Heart left ventricle (tissue), 16 donors: ENCODE measurements at regions of chr12 and their contacts with region 1.

Region 1: GRCh38 chr12:80195074-80195726 is 95.9 kb downstream of the OTOGL start:
- DNase-seq: peak in 1 of 5 donors; percentile 24
- ATAC-seq: peak in 2 of 4 donors; percentile 52 to 67
- H3K4me3 ChIP-seq: no peak overlapping the region
- H3K27ac ChIP-seq: peak overlapping the region in 1 of 12 donors; percentile 5
- H3K4me1 ChIP-seq: peaks cover 0 to 5% (median 0%) of the 10 kb centered on the region in 12 donors
- H3K27me3 ChIP-seq: no peaks in the 10 kb centered on the region
- CTCF ChIP-seq: peak; percentile 31 to 71 (median 51)
- POLR2A ChIP-seq: no peak

Region 2: GRCh38 chr12:79019672-79020071 is 1175.5 kb before region 1 on chr12:
- intact Hi-C with region 1: no loop called
- DNase-seq: no peak
- ATAC-seq: no peak
- H3K4me3 ChIP-seq: no peak overlapping the region
- H3K27ac ChIP-seq: no peak overlapping the region
- H3K4me1 ChIP-seq: no peaks in the 10 kb centered on the region
- H3K27me3 ChIP-seq: no peaks in the 10 kb centered on the region
- CTCF ChIP-seq: no peak
- POLR2A ChIP-seq: no peak

Region 3: GRCh38 chr12:79747274-79747673 is 447.9 kb before region 1 on chr12:
- intact Hi-C with region 1: loop called in 1 of 10 experiments (anchors 10 kb)
- DNase-seq: no peak
- ATAC-seq: no peak
- H3K4me3 ChIP-seq: no peak overlapping the region
- H3K27ac ChIP-seq: no peak overlapping the region
- H3K4me1 ChIP-seq: no peaks in the 10 kb centered on the region
- H3K27me3 ChIP-seq: no peaks in the 10 kb centered on the region
- CTCF ChIP-seq: no peak
- POLR2A ChIP-seq: no peak

Region 4: DNA sequence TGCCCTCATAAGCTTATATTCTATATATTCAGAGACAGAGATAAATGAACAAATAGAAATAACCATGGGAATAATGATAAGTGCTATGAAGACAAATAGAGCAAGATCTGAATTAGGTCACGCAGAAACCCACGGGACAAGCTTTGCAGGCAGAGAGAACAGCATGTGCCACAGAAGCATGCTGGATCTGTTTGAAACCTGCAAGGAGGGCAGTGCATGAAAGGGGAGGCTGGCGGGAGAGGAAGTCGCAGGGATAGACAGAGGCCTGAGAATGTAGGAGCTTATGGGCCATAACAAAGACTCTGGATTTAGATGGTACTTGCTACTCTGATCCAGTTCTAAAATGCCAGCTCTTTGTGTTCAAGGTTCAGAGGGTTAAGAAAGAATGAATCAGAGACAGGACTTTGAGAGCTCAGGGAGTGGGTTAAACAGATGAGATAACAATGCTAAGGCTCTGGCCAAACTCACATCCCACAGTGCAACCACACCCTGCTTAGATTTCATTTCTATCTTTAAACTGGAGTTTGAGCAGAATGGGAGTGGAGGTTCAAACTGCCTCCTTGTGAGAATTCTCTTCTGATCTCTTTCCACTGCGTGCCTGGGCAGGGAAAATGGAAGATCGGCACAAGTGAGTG is 211.1 kb before region 1 on chr12:
- intact Hi-C with region 1: no loop called
- DNase-seq: no peak
- ATAC-seq: peak in 2 of 4 donors; percentile 42 to 58
- H3K4me3 ChIP-seq: no peak overlapping the region
- H3K27ac ChIP-seq: no peak overlapping the region
- H3K4me1 ChIP-seq: peaks cover 0 to 4% (median 0%) of the 10 kb centered on the region in 12 donors
- H3K27me3 ChIP-seq: no peaks in the 10 kb centered on the region
- CTCF ChIP-seq: no peak
- POLR2A ChIP-seq: no peak